PC-9 (cell line): ENCODE measurements at regions of chr9 and their contacts with region 1.

Region 1: GRCh38 chr9:98707166-98708102 is 1.3 kb downstream of the GABBR2 start:
- DNase-seq: peak; percentile 69 to 81
- H3K4me3 ChIP-seq: peak overlapping the region; percentile 60
- H3K27ac ChIP-seq: peak overlapping the region; percentile 46; the same call in 1 of the 2 replicates
- H3K4me1 ChIP-seq: peaks cover 6% of the 10 kb centered on the region
- H3K27me3 ChIP-seq: peaks cover 22% of the 10 kb centered on the region
- CTCF ChIP-seq: peak; percentile 70

Region 2: DNA sequence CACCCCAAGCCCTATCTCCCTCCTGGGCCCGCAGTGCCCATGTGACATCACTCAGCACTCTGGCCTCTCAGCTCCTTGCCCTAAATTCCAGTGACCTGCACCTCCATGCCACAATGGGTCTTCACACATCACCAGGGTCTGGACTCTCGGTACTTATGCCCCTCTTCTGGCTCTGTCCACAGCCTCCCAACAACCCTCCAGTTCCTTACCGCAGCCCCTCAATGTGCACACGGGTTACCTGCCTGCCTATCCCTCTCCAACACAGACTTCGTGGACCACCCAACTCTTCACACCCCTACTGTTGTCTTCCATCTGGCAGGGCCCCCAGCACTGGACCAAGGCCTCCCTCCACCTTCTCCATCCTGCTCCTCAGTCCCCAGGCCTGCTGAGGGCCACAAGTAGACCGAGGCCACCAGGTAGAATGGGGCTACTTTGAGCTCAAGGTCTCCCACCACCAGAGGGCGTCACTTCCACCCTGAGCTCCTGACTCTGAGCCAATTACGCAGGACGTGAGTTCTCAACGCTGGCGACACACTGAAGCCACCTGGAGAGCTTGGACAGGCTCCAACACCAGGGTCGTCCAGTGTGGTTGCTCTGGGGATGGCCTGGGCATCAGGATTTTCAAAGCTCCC is 170.8 kb before region 1 on chr9:
- CTCF ChIA-PET with region 1: interaction called, 3 read pairs
- POLR2A ChIA-PET with region 1: no interaction called
- intact Hi-C with region 1: loop called (anchors 5 kb)
- DNase-seq: peak in 1 of 2 experiments; percentile 18
- H3K4me3 ChIP-seq: no peak overlapping the region
- H3K27ac ChIP-seq: no peak overlapping the region
- H3K4me1 ChIP-seq: no peaks in the 10 kb centered on the region
- H3K27me3 ChIP-seq: no peaks in the 10 kb centered on the region
- CTCF ChIP-seq: peak; percentile 60

Region 3: DNA sequence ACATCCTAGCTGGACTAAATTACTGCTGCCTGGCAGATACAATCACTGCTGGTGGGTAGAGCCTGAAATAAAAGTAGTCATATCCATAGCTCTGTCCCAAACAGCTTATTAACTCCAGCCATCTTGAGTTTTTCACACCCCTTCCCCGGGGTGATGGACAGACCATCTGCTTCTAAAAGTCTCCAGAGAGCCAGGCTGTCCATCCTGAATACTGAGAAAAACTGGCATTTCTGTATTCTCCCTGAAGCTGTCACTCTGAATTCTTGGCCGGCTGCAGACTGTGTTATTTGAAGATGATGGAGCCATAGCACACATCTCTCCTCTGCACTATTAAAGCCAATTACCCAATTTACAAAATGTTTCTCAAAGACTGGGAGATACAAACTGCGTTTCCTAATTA is 117.3 kb before region 1 on chr9:
- CTCF ChIA-PET with region 1: interaction called, 19 read pairs
- POLR2A ChIA-PET with region 1: no interaction called
- intact Hi-C with region 1: no loop called
- DNase-seq: no peak
- H3K4me3 ChIP-seq: no peak overlapping the region
- H3K27ac ChIP-seq: no peak overlapping the region
- H3K4me1 ChIP-seq: no peaks in the 10 kb centered on the region
- H3K27me3 ChIP-seq: no peaks in the 10 kb centered on the region
- CTCF ChIP-seq: no peak

Region 4: GRCh38 chr9:98791147-98792095 is 84.0 kb after region 1 on chr9:
- CTCF ChIA-PET with region 1: no interaction called
- POLR2A ChIA-PET with region 1: no interaction called
- intact Hi-C with region 1: loop called (anchors 2 kb)
- DNase-seq: peak; percentile 92 to 96
- H3K4me3 ChIP-seq: 0 out of 2 replicates have a peak overlapping the region, but pooled peaks have one; percentile 30
- H3K27ac ChIP-seq: peak overlapping the region; percentile 70
- H3K4me1 ChIP-seq: peaks cover 59% of the 10 kb centered on the region
- H3K27me3 ChIP-seq: no peaks in the 10 kb centered on the region
- CTCF ChIP-seq: peak; percentile 100

Region 5: GRCh38 chr9:99762470-99762869 is 1055.0 kb after region 1 on chr9:
- CTCF ChIA-PET with region 1: no interaction called
- POLR2A ChIA-PET with region 1: no interaction called
- intact Hi-C with region 1: no loop called
- DNase-seq: no peak
- H3K4me3 ChIP-seq: no peak overlapping the region
- H3K27ac ChIP-seq: no peak overlapping the region
- H3K4me1 ChIP-seq: no peaks in the 10 kb centered on the region
- H3K27me3 ChIP-seq: no peaks in the 10 kb centered on the region
- CTCF ChIP-seq: no peak